T-cell (primary cell): ENCODE measurements at regions of chr20 and their contacts with region 1.

Region 1: DNA sequence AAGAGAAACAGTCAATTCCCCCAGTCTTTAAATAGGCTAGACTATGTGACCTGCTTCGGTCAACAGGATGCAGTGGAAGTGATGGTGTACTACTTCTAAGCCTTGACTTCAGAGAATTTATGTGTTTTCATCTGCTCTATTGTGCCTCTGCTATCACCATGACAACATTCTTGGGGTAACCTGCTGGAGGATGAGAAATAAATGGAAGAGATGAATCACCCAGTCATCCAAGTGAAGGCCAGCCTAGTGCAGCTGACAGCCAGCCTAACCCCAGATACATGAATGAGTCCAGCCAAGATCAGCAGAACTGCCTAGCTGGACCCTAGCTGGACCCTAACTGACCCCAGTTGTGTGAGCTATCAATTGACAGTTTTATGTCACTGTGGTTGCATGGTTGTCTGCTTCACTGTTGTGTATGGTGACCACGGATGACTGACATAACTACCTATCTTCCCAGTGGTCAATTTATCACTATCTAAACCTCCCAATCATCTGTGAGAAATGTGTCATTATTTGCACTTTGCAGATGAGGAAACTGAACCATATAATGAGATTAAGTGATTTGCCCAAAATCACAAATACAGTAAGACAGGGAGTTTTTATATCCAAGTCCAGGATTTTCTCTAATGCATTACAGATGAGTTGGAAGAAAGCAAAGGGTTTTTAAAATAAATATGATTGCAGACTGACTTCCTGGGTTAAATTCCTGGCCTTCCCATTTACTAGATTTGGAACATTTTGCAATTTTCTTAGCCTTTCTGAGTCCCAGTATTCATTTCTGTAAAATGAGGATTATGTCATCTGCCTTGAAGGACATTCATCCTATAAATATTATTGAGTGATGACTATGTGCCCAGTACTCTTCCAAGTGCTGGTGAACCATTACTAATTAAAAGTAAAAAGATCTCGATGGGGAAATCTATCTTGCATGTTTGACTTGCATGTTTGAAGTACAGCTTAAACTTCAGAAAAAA is 136.4 kb upstream of the PLCB4 start:
- DNase-seq: no peak
- ATAC-seq: no peak
- H3K4me3 ChIP-seq: no peak overlapping the region
- H3K4me3 Mint-ChIP-seq: no peak overlapping the region
- H3K27ac ChIP-seq: no peak overlapping the region
- H3K27ac Mint-ChIP-seq: no peak overlapping the region
- H3K4me1 ChIP-seq: no peaks in the 10 kb centered on the region
- H3K4me1 Mint-ChIP-seq: no peaks in the 10 kb centered on the region
- H3K27me3 ChIP-seq: no peaks in the 10 kb centered on the region
- H3K27me3 Mint-ChIP-seq: no peaks in the 10 kb centered on the region

Region 2: DNA sequence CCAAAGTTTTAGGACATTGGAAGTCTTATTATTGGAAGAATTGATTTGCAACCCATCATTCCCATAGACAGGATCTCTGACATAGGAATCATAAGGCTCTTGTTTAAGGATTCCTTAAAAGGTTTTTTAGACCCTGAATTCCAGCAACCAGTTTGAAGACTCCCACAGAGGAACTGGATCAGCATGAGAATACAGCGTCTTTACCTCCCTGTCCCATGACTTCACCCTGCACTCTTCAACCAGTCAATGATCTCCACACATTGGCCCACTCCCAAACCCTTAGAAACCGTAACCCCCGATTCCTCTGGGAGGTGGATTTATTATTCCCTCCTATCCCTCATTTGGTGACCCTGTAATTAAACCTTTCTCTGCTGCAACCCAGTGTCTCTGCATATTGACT is 14.3 kb before region 1 on chr20:
- CTCF ChIA-PET with region 1: no interaction called
- POLR2A ChIA-PET with region 1: interaction called in 1 of 2 experiments, 10 read pairs
- DNase-seq: no peak
- ATAC-seq: no peak
- H3K4me3 ChIP-seq: no peak overlapping the region
- H3K4me3 Mint-ChIP-seq: no peak overlapping the region
- H3K27ac ChIP-seq: no peak overlapping the region
- H3K27ac Mint-ChIP-seq: no peak overlapping the region
- H3K4me1 ChIP-seq: no peaks in the 10 kb centered on the region
- H3K4me1 Mint-ChIP-seq: no peaks in the 10 kb centered on the region
- H3K27me3 ChIP-seq: no peaks in the 10 kb centered on the region
- H3K27me3 Mint-ChIP-seq: no peaks in the 10 kb centered on the region

Region 3: DNA sequence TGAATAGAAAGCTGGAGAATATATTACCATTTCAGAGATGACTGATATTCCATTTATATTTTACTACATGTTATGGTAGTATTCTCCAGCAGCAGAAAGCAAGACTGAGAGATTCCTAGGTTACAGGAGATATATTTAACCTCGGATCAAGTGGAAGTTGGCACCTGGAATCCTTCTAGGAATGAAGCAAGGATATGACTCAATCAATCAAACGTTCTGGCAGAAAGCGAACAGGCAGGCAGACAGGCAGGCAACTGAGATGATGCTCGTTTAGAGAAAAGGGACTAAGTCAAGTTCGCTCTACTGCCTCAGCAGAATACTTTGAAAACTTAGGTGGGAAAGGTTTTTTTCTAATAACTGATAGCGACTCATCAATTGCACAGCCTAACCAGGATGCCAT is 860.2 kb after region 1 on chr20:
- CTCF ChIA-PET with region 1: no interaction called
- POLR2A ChIA-PET with region 1: no interaction called
- DNase-seq: no peak
- ATAC-seq: no peak
- H3K4me3 ChIP-seq: no peak overlapping the region
- H3K4me3 Mint-ChIP-seq: no peak overlapping the region
- H3K27ac ChIP-seq: no peak overlapping the region
- H3K27ac Mint-ChIP-seq: no peak overlapping the region
- H3K4me1 ChIP-seq: no peaks in the 10 kb centered on the region
- H3K4me1 Mint-ChIP-seq: no peaks in the 10 kb centered on the region
- H3K27me3 ChIP-seq: no peaks in the 10 kb centered on the region
- H3K27me3 Mint-ChIP-seq: no peaks in the 10 kb centered on the region